SK-N-SH (cell line): ENCODE measurements at regions of chr12 and their contacts with region 1.

Region 1: GRCh38 chr12:106136263-106136662 is 2.5 kb downstream of the NUAK1 start:
- DNase-seq: peak; percentile 70
- H3K4me3 ChIP-seq: peak overlapping the region; percentile 80 to 85
- H3K27ac ChIP-seq: peak overlapping the region; percentile 69 to 71; a peak in 3 of 4 replicates
- H3K4me1 ChIP-seq: peaks cover 25 to 28% of the 10 kb centered on the region in 2 experiments
- H3K27me3 ChIP-seq: no peaks in the 10 kb centered on the region
- CTCF ChIP-seq: peak; percentile 88
- EP300 ChIP-seq: no peak; a peak in 1 of 4 replicates
- RAD21 ChIP-seq: peak; percentile 92

Region 2: GRCh38 chr12:105420659-105421240 is 715.5 kb before region 1 on chr12:
- CTCF ChIA-PET with region 1: interaction called, 72 read pairs
- POLR2A ChIA-PET with region 1: interaction called, 4 read pairs
- DNase-seq: peak; percentile 65
- H3K4me3 ChIP-seq: no peak overlapping the region; a peak in 1 of 4 replicates
- H3K27ac ChIP-seq: no peak overlapping the region
- H3K4me1 ChIP-seq: peaks cover 0 to 7% of the 10 kb centered on the region in 2 experiments; a peak in 2 of 4 replicates
- H3K27me3 ChIP-seq: no peaks in the 10 kb centered on the region
- CTCF ChIP-seq: peak; percentile 97
- EP300 ChIP-seq: no peak
- RAD21 ChIP-seq: peak; percentile 99

Region 3: DNA sequence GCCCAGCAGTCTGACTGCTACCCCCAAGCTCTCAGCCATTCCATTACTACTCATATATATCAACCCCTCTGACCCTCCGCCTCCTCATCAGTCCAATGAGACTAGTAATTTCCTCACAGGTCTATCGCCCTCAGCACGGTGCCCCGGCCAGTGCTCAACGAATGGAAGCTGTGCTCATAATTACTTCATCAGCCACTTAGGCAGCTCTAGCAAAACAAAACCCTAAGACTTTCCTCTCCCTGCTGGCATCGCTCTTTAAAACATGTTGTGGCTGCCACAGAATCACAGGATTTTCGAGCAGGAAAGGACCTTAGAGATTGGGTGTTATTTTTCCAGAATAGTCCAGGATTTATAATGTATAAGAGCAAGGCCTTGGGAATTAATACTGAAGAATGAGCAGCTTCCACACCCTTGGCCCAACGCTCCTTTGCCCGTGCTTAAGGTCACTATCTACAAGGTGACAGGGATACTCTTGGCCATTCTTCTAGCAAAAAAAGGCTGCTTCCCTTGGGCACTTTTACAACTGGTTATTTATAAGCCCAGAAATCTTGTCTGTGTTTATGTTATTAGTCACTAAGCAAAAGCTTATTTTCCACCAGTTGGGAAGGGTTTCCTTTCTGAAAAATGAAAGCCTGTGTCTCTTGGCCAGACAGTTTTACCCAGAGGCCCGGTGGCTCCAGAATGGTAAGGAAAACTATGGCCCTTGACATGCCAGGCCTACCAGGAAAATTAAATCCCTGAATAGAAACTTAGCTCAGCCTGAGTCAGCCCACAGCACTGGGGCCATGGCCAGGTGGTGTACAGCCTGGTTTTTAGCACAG is 45.5 kb before region 1 on chr12:
- CTCF ChIA-PET with region 1: no interaction called
- POLR2A ChIA-PET with region 1: no interaction called
- DNase-seq: no peak
- H3K4me3 ChIP-seq: no peak overlapping the region
- H3K27ac ChIP-seq: peak overlapping the region; percentile 20 to 91; a peak in 3 of 4 replicates
- H3K4me1 ChIP-seq: peaks cover 0 to 26% of the 10 kb centered on the region in 2 experiments; a peak in 2 of 4 replicates
- H3K27me3 ChIP-seq: no peaks in the 10 kb centered on the region
- CTCF ChIP-seq: no peak
- EP300 ChIP-seq: peak in 1 of 2 experiments; percentile 76; a peak in 2 of 4 replicates
- RAD21 ChIP-seq: no peak

Region 4: DNA sequence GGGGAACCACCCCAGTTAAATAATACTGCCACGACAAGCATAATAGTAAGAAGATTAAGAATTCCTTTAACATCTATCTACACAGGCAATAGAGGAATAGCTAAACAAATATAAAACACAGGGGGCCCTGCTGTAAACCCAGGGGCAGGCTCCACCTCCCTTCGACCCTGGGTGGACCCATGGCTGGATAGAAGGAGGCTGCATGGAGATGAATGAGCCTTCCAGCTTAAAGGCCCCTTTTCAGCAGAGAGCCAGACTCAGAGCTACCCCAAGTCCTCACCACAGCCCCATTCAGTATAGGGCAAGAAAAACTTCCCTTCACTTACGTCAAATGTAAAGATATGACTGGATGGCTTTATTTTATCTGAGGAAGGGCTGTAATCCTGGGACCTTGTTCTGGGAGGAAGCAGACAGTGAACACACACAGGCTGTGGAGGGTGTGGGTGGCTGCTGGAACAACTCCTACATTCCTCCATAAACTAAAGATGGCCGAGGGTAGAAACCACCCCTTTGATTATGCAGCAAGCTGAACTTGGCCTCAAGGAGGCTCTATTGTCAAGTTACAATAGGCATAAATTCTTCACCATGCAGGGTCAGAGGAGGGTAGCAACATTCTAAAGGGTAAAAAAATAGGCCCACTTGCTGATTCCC is 28.0 kb before region 1 on chr12:
- CTCF ChIA-PET with region 1: interaction called, 17 read pairs
- POLR2A ChIA-PET with region 1: no interaction called
- DNase-seq: no peak
- H3K4me3 ChIP-seq: no peak overlapping the region
- H3K27ac ChIP-seq: peak overlapping the region; percentile 2 to 73; a peak in 3 of 4 replicates
- H3K4me1 ChIP-seq: peaks cover 19 to 42% of the 10 kb centered on the region in 2 experiments
- H3K27me3 ChIP-seq: no peaks in the 10 kb centered on the region
- CTCF ChIP-seq: peak; percentile 31; the same call in 1 of the 2 replicates
- EP300 ChIP-seq: no peak
- RAD21 ChIP-seq: no peak

Region 5: DNA sequence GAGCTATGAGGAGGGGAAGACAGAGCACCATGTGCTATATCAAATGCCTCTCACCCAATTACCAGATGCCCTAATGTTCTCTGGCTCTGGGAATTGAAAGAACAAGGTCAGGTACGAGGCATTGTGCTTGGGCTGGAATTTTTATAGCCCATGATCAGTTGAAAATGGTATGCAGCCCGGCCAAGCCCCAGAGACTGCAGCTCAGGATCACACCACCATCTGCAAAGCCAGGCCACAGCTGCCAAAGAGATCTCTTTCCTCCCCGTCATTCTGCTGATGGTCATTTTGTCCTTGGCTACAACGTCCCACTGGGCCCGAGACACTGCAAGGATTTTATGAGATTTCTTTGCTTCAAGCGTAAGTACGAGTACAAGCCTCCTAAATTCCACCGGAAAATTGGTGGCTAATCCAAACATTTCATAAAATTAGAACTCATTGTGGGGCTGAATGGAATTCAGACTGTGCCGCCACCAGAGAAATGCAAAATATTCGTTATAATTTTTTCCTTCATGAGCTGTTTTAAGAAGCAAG is 12.6 kb before region 1 on chr12:
- CTCF ChIA-PET with region 1: interaction called, 33 read pairs
- POLR2A ChIA-PET with region 1: no interaction called
- DNase-seq: no peak
- H3K4me3 ChIP-seq: no peak overlapping the region
- H3K27ac ChIP-seq: no peak overlapping the region
- H3K4me1 ChIP-seq: peaks cover 0 to 13% of the 10 kb centered on the region in 2 experiments; a peak in 2 of 4 replicates
- H3K27me3 ChIP-seq: no peaks in the 10 kb centered on the region
- CTCF ChIP-seq: no peak
- EP300 ChIP-seq: no peak
- RAD21 ChIP-seq: no peak

Region 6: GRCh38 chr12:106223485-106224354 is 87.5 kb after region 1 on chr12:
- CTCF ChIA-PET with region 1: interaction called, 10 read pairs
- POLR2A ChIA-PET with region 1: no interaction called
- DNase-seq: peak; percentile 81
- H3K4me3 ChIP-seq: peak overlapping the region in 1 of 2 experiments; percentile 21; a peak in 1 of 4 replicates
- H3K27ac ChIP-seq: no peak overlapping the region
- H3K4me1 ChIP-seq: no peaks in the 10 kb centered on the region
- H3K27me3 ChIP-seq: no peaks in the 10 kb centered on the region
- CTCF ChIP-seq: peak; percentile 87
- EP300 ChIP-seq: no peak
- RAD21 ChIP-seq: peak; percentile 75